ENCODE measurements at regions of chr7 and their contacts with region 1.

Region 1: GRCh38 chr7:56106108-56107073 is at the start of gene CHCHD2:
- DNase-seq: peak; percentile 97
- CTCF ChIP-seq: no peak

Region 2: DNA sequence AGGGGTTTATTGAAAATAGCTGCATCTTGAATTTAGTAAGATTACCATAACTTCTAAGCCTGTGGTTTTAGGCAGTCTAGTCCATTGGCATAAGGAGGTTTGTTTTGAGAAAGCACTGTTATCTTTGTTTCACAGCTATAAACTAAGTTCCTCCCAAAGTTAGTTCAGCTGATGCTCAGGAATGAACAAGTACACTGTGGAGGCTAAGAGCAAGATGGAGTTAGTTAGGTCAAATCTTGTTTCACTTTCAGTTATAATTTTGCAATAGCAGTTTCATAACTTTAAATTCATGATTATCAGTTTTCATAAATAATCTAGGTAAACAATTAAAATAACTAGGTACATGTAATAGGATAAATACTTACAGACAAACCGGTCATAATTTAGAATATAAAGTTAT is 1362.8 kb before region 1 on chr7:
- CTCF ChIA-PET with region 1: no interaction called
- POLR2A ChIA-PET with region 1: interaction called, 10 read pairs
- DNase-seq: no peak
- CTCF ChIP-seq: no peak